ENCODE measurements at regions of chr17 and their contacts with region 1.

Region 1: DNA sequence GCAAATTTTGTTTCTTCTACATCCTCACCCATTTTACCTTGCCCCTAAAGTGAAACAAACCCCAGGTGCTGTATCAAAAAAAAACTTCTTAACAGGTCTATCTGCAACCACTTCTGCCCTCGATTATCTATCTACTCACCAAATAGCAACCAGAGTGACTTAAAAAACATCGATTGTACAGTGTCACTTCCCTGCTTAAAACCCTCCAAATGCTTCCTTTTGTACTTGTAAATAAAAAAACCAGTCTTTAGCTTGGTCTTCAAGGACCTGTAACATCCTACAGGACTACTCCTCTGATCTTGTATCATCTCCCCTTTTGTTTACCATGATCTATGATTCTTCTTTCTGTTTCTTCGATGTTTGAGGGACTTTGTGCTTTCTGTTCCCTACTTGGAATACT is 82.7 kb upstream of the CORO6 start:
- DNase-seq: no peak
- ATAC-seq: peak; percentile 7; the same call in 2 of the 3 replicates
- H3K4me3 ChIP-seq: peak overlapping the region; percentile 43; the same call in 1 of the 2 replicates
- H3K27ac ChIP-seq: peak overlapping the region; percentile 91
- H3K4me1 ChIP-seq: peaks cover 29% of the 10 kb centered on the region
- H3K27me3 ChIP-seq: no peaks in the 10 kb centered on the region
- CTCF ChIP-seq: no peak
- EP300 ChIP-seq: no peak
- POLR2A ChIP-seq: no peak
- RAD21 ChIP-seq: no peak

Region 2: DNA sequence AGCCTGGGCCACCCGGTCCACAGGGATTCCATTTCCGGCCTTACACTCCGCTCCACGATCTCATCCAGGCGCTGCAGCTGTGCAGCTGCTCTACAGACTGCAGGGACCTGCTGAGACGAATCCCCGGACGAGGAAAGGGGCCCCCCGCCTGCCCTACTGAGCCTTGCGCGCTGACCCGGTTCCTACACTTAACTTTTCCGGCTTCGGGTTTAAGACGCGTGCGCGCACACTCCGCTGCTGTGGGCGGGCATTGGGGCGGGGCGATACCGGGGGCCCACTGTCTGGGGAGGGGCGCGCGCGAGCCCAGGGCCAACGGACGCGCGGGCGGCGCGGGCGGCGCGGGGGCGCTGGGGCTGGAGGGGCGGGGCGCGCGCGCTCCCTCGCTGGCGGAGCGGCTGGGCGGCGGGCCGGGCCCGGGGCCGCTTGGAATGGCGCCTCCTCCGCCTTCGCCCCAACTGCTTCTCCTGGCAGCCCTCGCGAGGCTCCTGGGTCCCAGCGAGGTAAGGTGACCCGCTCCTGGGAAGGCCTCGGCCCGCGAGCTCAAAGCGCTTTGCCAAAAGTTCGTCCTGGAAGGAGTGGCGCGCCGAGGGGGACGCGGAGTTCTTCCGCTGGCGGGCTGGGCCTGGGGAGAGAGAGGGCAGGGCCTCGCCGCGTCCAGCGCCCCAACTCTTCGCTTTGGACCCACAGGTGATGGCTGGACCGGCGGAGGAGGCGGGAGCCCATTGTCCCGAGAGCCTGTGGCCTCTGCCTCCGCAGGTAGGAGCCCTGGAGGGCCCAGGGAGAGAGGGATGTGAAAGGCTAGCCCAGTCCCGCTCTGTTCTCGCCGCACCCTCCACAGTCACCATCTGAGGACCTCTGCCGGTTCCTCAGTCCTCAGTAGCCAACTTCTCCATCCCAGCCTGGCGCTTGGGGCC is 136.8 kb before region 1 on chr17 and contains the start of gene TP53I13:
- CTCF ChIA-PET with region 1: no interaction called
- POLR2A ChIA-PET with region 1: no interaction called
- RAD21 ChIA-PET with region 1: no interaction called
- SMC1A ChIA-PET with region 1: no interaction called
- in situ Hi-C with region 1: no loop called
- intact Hi-C with region 1: no loop called
- DNase-seq: no peak
- ATAC-seq: peak; percentile 64
- H3K4me3 ChIP-seq: peak within 1 kb of the TSS; percentile 96
- H3K27ac ChIP-seq: peak within 1 kb of the TSS; percentile 81
- H3K4me1 ChIP-seq: peaks cover 6% of the 10 kb centered on the region; the same call in 1 of the 2 replicates
- H3K27me3 ChIP-seq: no peaks in the 10 kb centered on the region
- CTCF ChIP-seq: no peak
- EP300 ChIP-seq: no peak
- POLR2A ChIP-seq: peak; percentile 78
- RAD21 ChIP-seq: no peak
- polyA plus RNA-seq, gene TP53I13: 0.31 TPM in 1 of 2 experiments, not detected in the other

Region 3: DNA sequence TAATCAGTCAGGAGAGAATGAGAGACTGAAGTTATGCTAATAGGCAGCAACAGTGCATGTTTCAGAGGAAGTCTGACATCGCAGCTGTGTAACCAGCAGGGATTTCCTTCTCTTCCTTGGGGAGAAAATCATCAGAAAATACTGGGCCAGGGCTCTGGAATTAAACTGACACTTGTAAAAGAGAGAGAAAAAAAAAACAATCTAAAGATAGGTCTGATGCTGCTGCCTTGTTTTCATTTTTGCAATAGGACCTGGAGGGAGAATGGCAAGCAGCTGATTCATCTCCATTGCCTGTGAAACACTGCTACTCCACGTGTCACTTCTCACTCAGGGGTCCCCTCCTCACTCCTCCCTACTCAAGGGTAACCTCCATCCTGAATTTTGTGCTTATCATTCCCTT is 65.0 kb before region 1 on chr17:
- CTCF ChIA-PET with region 1: interaction called, 17 read pairs
- POLR2A ChIA-PET with region 1: no interaction called
- RAD21 ChIA-PET with region 1: interaction called, 6 read pairs
- SMC1A ChIA-PET with region 1: interaction called, 6 read pairs
- in situ Hi-C with region 1: no loop called
- intact Hi-C with region 1: no loop called
- DNase-seq: no peak
- ATAC-seq: no peak
- H3K4me3 ChIP-seq: no peak overlapping the region
- H3K27ac ChIP-seq: no peak overlapping the region
- H3K4me1 ChIP-seq: peaks cover 3% of the 10 kb centered on the region
- H3K27me3 ChIP-seq: no peaks in the 10 kb centered on the region
- CTCF ChIP-seq: no peak
- EP300 ChIP-seq: no peak
- POLR2A ChIP-seq: no peak
- RAD21 ChIP-seq: no peak

Region 4: DNA sequence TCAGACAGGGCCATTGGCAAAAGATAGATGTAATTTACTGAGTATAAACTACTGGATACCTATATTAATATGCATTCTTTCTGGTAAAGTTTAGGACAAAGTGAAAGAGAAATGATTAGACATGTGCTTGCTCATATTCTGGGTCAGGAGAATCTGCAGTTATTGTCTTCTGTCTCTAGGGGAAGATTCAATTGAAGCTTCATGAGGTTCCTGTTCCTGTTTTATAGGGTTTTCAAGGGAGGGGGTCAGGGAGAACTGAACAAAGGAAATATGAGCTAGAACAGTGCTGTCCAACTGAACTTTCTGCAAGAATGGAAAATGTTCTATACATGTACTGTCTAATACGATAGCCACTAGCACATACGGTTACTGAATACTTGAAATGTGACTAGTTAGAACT is 23.3 kb before region 1 on chr17:
- CTCF ChIA-PET with region 1: interaction called, 18 read pairs
- POLR2A ChIA-PET with region 1: interaction called, 3 read pairs
- RAD21 ChIA-PET with region 1: interaction called, 9 read pairs
- SMC1A ChIA-PET with region 1: interaction called, 9 read pairs
- in situ Hi-C with region 1: no loop called
- intact Hi-C with region 1: no loop called
- DNase-seq: no peak
- ATAC-seq: peak; percentile 91
- H3K4me3 ChIP-seq: no peak overlapping the region
- H3K27ac ChIP-seq: peak overlapping the region; percentile 53; the same call in 1 of the 2 replicates
- H3K4me1 ChIP-seq: 0 out of 2 replicates have a peak, but pooled peaks cover 4% of the 10 kb centered on the region
- H3K27me3 ChIP-seq: no peaks in the 10 kb centered on the region
- CTCF ChIP-seq: peak; percentile 5 to 22 (median 12); a peak in 1 of 6 replicates
- EP300 ChIP-seq: no peak
- POLR2A ChIP-seq: no peak
- RAD21 ChIP-seq: peak; percentile 32

Region 5: DNA sequence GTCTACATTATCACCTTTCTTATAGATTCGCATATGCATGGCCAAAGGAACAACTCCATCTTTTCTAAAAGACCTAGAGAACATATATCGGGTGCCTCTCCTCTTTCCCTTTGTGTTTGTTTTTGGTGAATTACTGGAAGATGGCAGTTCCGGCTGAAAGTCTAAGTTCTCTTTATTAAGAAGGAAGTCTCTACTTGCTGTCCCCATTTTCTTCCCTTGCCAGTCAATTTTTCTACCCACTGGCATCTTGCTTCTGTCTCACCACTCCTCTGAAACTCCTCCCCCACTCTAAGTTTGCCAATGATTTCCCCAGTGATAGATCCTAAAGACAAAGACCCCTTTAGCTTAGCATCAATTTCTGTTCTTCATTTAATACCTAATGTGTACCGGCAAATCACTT is 11.2 kb after region 1 on chr17:
- CTCF ChIA-PET with region 1: interaction called, 50 read pairs
- POLR2A ChIA-PET with region 1: interaction called, 87 read pairs
- RAD21 ChIA-PET with region 1: interaction called, 141 read pairs
- SMC1A ChIA-PET with region 1: interaction called, 224 read pairs
- in situ Hi-C with region 1: no loop called
- intact Hi-C with region 1: no loop called
- DNase-seq: no peak
- ATAC-seq: no peak
- H3K4me3 ChIP-seq: no peak overlapping the region
- H3K27ac ChIP-seq: no peak overlapping the region
- H3K4me1 ChIP-seq: peaks cover 45% of the 10 kb centered on the region
- H3K27me3 ChIP-seq: no peaks in the 10 kb centered on the region
- CTCF ChIP-seq: no peak
- EP300 ChIP-seq: no peak
- POLR2A ChIP-seq: no peak
- RAD21 ChIP-seq: no peak

Region 6: GRCh38 chr17:29760761-29761696 is 55.6 kb after region 1 on chr17:
- CTCF ChIA-PET with region 1: interaction called, 8 read pairs
- POLR2A ChIA-PET with region 1: interaction called, 54 read pairs
- RAD21 ChIA-PET with region 1: interaction called, 65 read pairs
- SMC1A ChIA-PET with region 1: interaction called, 39 read pairs
- in situ Hi-C with region 1: no loop called
- intact Hi-C with region 1: loop called (anchors 1 kb)
- DNase-seq: peak; percentile 55
- ATAC-seq: peak; percentile 92
- H3K4me3 ChIP-seq: peak overlapping the region; percentile 88
- H3K27ac ChIP-seq: peak overlapping the region; percentile 90
- H3K4me1 ChIP-seq: peaks cover 11% of the 10 kb centered on the region; the same call in 1 of the 2 replicates
- H3K27me3 ChIP-seq: no peaks in the 10 kb centered on the region
- CTCF ChIP-seq: no peak
- EP300 ChIP-seq: 0 out of 4 replicates have a peak, but pooled peaks of 1 of the 2 experiments have one; percentile 4
- POLR2A ChIP-seq: peak; percentile 91
- RAD21 ChIP-seq: no peak